Pancreas (tissue), 10 donors: ENCODE measurements at regions of chr7 and their contacts with region 1.

Region 1: GRCh38 chr7:63054191-63054661 is 944.4 kb upstream of the ZNF722 start:
- DNase-seq: no peak
- ATAC-seq: no peak
- H3K4me3 ChIP-seq: no peak overlapping the region
- H3K27ac ChIP-seq: no peak overlapping the region
- H3K4me1 ChIP-seq: no peaks in the 10 kb centered on the region
- H3K27me3 ChIP-seq: no peaks in the 10 kb centered on the region
- CTCF ChIP-seq: no peak

Region 2: DNA sequence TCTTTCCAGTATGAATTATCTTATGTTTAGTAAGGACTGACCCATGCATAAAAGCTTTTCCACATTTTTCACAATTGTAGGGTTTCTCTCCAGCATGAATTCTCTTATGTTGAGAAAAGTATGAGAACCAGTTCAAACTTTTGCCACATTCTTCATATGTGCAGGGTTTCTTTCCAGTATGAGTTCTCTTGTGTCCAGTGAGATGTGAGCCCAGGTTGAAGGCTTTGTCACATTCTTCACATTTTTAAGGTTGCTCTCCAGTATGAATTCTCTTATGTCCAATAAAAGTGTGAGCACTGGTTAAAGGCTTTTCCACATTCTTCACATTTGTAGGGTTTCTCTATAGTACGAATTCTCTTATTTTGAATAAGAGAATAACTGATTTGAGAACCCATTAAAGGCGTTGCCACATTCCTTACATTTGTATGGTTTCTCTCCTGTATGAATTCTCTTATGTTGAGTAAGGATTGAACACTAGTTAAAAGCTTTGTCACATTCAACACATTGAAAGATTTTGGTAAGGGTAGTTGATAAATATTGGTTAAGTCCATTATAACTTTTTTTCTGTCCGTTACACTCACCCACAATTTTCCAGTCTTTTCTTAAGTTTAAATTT is 33.5 kb after region 1 on chr7:
- intact Hi-C with region 1: loop called in 1 of 3 experiments (anchors 5 kb)
- DNase-seq: no peak
- ATAC-seq: no peak
- H3K4me3 ChIP-seq: no peak overlapping the region
- H3K27ac ChIP-seq: no peak overlapping the region
- H3K4me1 ChIP-seq: no peaks in the 10 kb centered on the region
- H3K27me3 ChIP-seq: no peaks in the 10 kb centered on the region
- CTCF ChIP-seq: no peak

Region 3: DNA sequence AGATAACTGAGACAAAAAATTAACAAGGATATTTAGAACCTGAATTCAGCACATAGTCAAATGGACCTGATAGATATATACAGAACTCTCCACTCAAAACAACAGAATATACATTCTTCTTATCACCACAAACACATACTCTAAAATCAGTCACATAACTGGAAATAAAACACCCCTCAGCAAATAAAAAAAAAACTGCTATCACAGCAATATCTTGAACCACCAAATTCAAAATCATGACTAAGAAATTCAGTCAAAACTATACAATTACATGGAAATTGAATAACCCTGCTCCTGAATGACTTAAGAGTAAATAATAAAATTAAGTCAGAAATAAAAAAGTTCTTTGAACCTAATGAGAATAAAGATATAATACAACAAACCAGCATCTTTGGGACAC is 914.4 kb after region 1 on chr7:
- intact Hi-C with region 1: no loop called
- DNase-seq: no peak
- ATAC-seq: no peak
- H3K4me3 ChIP-seq: no peak overlapping the region
- H3K27ac ChIP-seq: no peak overlapping the region
- H3K4me1 ChIP-seq: no peaks in the 10 kb centered on the region
- H3K27me3 ChIP-seq: no peaks in the 10 kb centered on the region
- CTCF ChIP-seq: no peak